Colonic mucosa (tissue), 4 donors: ENCODE measurements at regions of chr15 and their contacts with region 1.

Region 1: GRCh38 chr15:94300612-94301011 is 69.3 kb downstream of the MCTP2 start:
- DNase-seq: no peak
- H3K4me3 ChIP-seq: no peak overlapping the region
- H3K27ac ChIP-seq: no peak overlapping the region
- H3K4me1 ChIP-seq: no peaks in the 10 kb centered on the region
- H3K27me3 ChIP-seq: no peaks in the 10 kb centered on the region
- CTCF ChIP-seq: no peak

Region 2: GRCh38 chr15:94229591-94230365 is 70.8 kb before region 1 on chr15:
- intact Hi-C with region 1: loop called (anchors 5 kb)
- DNase-seq: no peak
- H3K4me3 ChIP-seq: peak overlapping the region; percentile 67
- H3K27ac ChIP-seq: peak overlapping the region; percentile 93
- H3K4me1 ChIP-seq: no peaks in the 10 kb centered on the region
- H3K27me3 ChIP-seq: no peaks in the 10 kb centered on the region
- CTCF ChIP-seq: no peak